T-cell (primary cell): ENCODE measurements at regions of chr2 and their contacts with region 1.

Region 1: DNA sequence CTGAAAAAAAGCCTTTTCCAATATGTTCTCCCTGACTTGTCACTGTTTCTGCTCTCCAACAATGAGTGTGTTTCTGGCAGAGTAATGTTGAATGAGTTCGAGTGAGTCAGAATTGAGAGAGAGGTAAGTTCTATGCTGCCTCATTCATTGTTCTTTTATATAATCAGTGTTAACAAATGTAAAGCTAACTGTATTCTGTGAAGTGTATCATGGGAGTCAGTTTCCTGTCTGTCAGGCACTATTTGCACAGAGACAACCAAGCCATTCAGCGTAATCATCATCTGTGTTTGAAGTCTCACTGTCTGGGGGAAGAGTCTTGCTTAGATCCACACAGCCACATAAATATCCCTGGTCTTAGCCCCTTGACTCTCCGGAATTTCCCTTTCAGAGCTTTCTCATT is 22.0 kb upstream of the UPP2 start:
- DNase-seq: no peak
- ATAC-seq: no peak
- H3K4me3 ChIP-seq: no peak overlapping the region
- H3K4me3 Mint-ChIP-seq: no peak overlapping the region
- H3K27ac ChIP-seq: no peak overlapping the region
- H3K27ac Mint-ChIP-seq: no peak overlapping the region
- H3K4me1 ChIP-seq: no peaks in the 10 kb centered on the region
- H3K4me1 Mint-ChIP-seq: no peaks in the 10 kb centered on the region
- H3K27me3 ChIP-seq: no peaks in the 10 kb centered on the region
- H3K27me3 Mint-ChIP-seq: peaks cover 3 to 21% of the 10 kb centered on the region in 2 donors

Region 2: GRCh38 chr2:156192468-156192867 is 1887.2 kb before region 1 on chr2:
- CTCF ChIA-PET with region 1: no interaction called
- POLR2A ChIA-PET with region 1: no interaction called
- DNase-seq: peak in 1 of 35 experiments; percentile 27
- ATAC-seq: no peak
- H3K4me3 ChIP-seq: no peak overlapping the region
- H3K4me3 Mint-ChIP-seq: no peak overlapping the region
- H3K27ac ChIP-seq: no peak overlapping the region
- H3K27ac Mint-ChIP-seq: no peak overlapping the region
- H3K4me1 ChIP-seq: no peaks in the 10 kb centered on the region
- H3K4me1 Mint-ChIP-seq: no peaks in the 10 kb centered on the region
- H3K27me3 ChIP-seq: no peaks in the 10 kb centered on the region
- H3K27me3 Mint-ChIP-seq: no peaks in the 10 kb centered on the region

Region 3: DNA sequence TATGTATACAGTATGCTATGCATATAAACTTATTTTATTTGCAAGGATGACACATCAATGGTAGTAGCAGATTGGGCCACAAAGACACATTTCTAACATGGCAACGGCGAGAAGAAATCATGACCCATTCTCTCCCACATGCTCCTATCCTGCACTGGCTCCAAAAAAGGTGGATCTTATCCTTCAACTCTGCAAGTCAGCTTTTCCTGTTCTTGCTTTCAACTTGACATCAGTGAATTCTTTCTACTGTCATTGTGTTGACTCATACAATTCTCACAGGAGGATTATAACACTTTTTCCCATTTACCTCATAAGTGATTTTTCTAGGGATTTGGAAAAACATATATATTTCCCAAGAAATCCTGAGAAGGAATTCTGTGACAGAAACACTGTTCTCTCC is 256.7 kb before region 1 on chr2:
- CTCF ChIA-PET with region 1: interaction called in 1 of 2 experiments, 10 read pairs
- POLR2A ChIA-PET with region 1: no interaction called
- DNase-seq: no peak
- ATAC-seq: no peak
- H3K4me3 ChIP-seq: no peak overlapping the region
- H3K4me3 Mint-ChIP-seq: no peak overlapping the region
- H3K27ac ChIP-seq: no peak overlapping the region
- H3K27ac Mint-ChIP-seq: no peak overlapping the region
- H3K4me1 ChIP-seq: no peaks in the 10 kb centered on the region
- H3K4me1 Mint-ChIP-seq: peaks cover 6 to 18% (median 13%) of the 10 kb centered on the region in 3 donors
- H3K27me3 ChIP-seq: no peaks in the 10 kb centered on the region
- H3K27me3 Mint-ChIP-seq: no peaks in the 10 kb centered on the region

Region 4: DNA sequence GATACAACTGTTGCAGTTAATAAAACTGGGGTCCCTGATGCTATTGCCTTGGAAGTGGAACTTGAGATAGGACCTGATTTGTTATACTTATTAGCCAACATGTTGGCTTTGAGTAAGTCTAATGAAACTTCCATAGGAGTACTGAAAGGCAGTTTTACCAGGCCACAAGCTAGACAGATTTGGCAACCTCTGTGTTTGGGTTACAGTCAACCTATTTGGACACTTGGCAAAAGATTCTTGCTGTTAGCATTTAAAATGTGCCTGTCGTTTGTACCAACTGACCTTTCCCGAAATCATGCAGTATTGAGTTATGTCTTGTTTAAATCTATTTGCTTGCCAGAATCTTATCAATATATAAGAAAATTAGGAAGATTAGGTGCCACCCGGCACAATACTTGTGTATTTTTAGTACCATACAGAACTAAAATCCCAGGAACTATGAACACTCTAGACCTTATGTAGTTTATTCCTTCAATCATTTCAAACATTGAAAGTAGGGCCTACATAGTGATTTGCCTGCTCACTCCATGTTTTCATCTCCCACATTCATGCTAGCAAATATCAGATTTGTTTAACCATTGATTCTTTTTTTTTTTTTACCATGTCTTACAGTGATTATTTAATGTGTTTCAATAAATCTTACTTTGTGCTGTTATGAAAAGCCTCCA is 13.5 kb before region 1 on chr2:
- CTCF ChIA-PET with region 1: no interaction called
- POLR2A ChIA-PET with region 1: no interaction called
- DNase-seq: no peak
- ATAC-seq: no peak
- H3K4me3 ChIP-seq: no peak overlapping the region
- H3K4me3 Mint-ChIP-seq: no peak overlapping the region
- H3K27ac ChIP-seq: no peak overlapping the region
- H3K27ac Mint-ChIP-seq: no peak overlapping the region
- H3K4me1 ChIP-seq: no peaks in the 10 kb centered on the region
- H3K4me1 Mint-ChIP-seq: no peaks in the 10 kb centered on the region
- H3K27me3 ChIP-seq: peaks cover 0 to 8% of the 10 kb centered on the region in 2 experiments
- H3K27me3 Mint-ChIP-seq: peaks cover 3 to 5% of the 10 kb centered on the region in 2 donors

Region 5: GRCh38 chr2:158990397-158991209 is 910.9 kb after region 1 on chr2:
- CTCF ChIA-PET with region 1: no interaction called
- POLR2A ChIA-PET with region 1: no interaction called
- DNase-seq: no peak
- ATAC-seq: no peak
- H3K4me3 ChIP-seq: no peak overlapping the region
- H3K4me3 Mint-ChIP-seq: no peak overlapping the region
- H3K27ac ChIP-seq: no peak overlapping the region
- H3K27ac Mint-ChIP-seq: no peak overlapping the region
- H3K4me1 ChIP-seq: no peaks in the 10 kb centered on the region
- H3K4me1 Mint-ChIP-seq: no peaks in the 10 kb centered on the region
- H3K27me3 ChIP-seq: no peaks in the 10 kb centered on the region
- H3K27me3 Mint-ChIP-seq: peaks cover 5 to 9% of the 10 kb centered on the region in 2 donors